IMR-90 (cell line): ENCODE measurements at regions of chr3 and their contacts with region 1.

Region 1: DNA sequence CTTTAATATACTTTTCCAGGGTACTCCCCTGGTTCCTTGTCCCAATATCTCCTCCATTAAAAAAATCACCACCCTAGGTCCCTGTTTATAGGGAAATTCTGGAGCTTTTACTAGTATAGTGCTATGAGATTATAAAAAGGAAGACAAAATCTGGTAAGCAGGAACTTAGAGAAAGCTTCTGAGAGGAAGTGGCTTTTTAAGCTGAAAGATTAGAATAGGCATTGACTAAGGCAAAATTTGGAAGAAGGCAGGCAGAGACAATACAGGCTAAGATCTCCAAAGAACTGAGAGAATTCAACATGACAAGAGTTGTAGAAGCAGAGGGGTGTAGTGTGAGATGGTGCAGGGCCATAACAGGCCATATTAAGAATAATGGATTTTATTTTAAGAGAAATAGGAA is 25.8 kb downstream of the SGO1 start:
- DNase-seq: no peak
- ATAC-seq: no peak
- H3K4me3 ChIP-seq: no peak overlapping the region
- H3K27ac ChIP-seq: no peak overlapping the region
- H3K4me1 ChIP-seq: no peaks in the 10 kb centered on the region
- H3K27me3 ChIP-seq: no peaks in the 10 kb centered on the region
- CTCF ChIP-seq: no peak
- POLR2A ChIP-seq: no peak
- RAD21 ChIP-seq: no peak

Region 2: GRCh38 chr3:20141851-20142250 is 18.4 kb before region 1 on chr3:
- CTCF ChIA-PET with region 1: no interaction called
- POLR2A ChIA-PET with region 1: interaction called, 10 read pairs
- dilution Hi-C with region 1: no loop called
- in situ Hi-C with region 1: no loop called
- intact Hi-C with region 1: no loop called
- DNase-seq: no peak
- ATAC-seq: peak; percentile 27; the same call in 1 of the 2 replicates
- H3K4me3 ChIP-seq: no peak overlapping the region
- H3K27ac ChIP-seq: no peak overlapping the region
- H3K4me1 ChIP-seq: no peaks in the 10 kb centered on the region
- H3K27me3 ChIP-seq: no peaks in the 10 kb centered on the region
- CTCF ChIP-seq: no peak
- POLR2A ChIP-seq: no peak
- RAD21 ChIP-seq: no peak